K562 (cell line): ENCODE measurements at regions of chr2 and their contacts with region 1.

Region 1: DNA sequence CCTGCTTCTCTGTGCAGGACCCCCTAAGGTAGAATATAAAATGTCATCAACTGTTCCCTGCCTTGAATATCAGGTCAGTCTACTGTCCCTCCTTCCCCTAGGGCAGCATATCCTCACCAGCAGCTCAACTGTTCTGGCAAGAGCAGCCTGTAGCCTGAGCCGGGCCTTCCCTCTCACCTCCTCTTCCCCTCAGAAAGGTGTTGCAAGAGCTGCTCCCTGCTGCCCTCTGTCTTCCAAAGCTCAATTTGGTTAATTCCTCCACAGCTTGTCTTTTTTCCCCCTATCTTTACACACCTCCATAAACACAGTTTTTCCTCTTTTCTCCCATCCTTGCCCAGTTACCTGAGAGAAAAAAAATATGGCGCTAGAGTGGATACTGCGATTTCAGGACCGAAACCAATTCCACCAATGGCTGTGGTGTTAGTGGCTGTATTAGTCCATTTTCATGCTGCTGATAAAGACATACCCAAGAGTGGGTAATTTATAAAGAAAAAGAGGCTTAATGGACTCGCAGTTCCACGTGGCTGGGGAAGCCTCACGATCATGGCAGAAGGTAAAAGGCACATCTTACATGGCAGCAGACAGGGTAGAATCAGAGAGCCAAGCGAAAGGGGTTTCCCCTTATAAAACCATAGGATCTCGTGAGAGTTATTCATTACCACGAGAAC is 184.7 kb downstream of the MREG start:
- DNase-seq: peak; percentile 28 to 74 (median 42)
- ATAC-seq: peak; percentile 74
- H3K4me3 ChIP-seq: no peak overlapping the region
- H3K27ac ChIP-seq: no peak overlapping the region
- H3K4me1 ChIP-seq: peaks cover 6 to 31% of the 10 kb centered on the region in 2 experiments; a peak in 3 of 5 replicates
- H3K27me3 ChIP-seq: no peaks in the 10 kb centered on the region
- CTCF ChIP-seq: peak; percentile 57 to 69 (median 65)
- EP300 ChIP-seq: no peak
- POLR2A ChIP-seq: no peak
- RAD21 ChIP-seq: peak; percentile 56 to 65

Region 2: DNA sequence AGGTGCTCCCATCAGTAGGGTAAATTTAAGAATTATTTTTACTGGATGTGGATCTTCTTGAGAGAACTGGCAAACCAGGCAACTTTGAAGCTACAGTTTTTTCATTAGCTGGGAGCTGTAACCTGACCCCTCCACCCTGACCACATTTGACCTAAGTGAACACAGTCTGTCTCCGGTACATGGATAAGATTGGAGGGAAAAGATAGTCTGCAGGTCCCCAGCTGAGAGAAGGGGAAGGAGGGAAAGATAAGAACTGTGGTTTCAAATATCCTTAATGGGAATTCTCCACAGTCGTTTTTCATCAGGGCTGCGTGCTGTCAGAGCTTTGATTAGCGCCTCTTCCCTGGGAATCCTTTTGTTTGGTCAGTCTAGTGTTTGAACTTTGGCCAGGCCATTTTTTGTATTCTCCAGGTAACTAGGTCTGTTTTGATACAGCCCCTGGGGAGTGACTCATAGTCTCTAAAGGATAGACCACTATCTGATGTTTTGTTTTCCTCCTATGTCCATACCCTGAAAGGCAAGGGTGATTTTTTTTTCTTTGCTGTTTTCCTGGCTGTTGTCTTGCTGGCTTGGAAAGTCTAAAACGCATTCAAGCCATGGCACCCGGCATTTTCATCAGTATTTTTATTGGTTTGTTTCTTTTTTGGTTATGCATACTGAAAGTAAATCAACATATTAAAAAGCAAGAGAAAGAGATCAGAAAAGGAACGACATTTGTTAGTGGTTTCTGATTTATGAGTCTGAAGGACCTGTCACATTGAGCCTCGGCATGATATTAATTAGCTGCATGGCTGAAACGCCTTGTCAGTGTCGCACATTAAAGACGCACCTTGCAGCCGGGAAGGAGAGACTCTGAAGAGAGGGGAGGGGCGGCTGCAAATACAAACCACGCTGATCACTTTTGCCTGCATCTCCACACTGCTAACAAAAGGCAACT is 209.4 kb before region 1 on chr2:
- CTCF ChIA-PET with region 1: no interaction called
- POLR2A ChIA-PET with region 1: no interaction called
- in situ Hi-C with region 1: no loop called
- intact Hi-C with region 1: loop called (anchors 1 kb)
- DNase-seq: peak; percentile 70 to 85 (median 74)
- ATAC-seq: peak; percentile 86
- H3K4me3 ChIP-seq: no peak overlapping the region; the same call in 1 of the 2 replicates
- H3K27ac ChIP-seq: peak overlapping the region; percentile 81
- H3K4me1 ChIP-seq: peaks cover 3 to 21% of the 10 kb centered on the region in 2 experiments; a peak in 4 of 5 replicates
- H3K27me3 ChIP-seq: no peaks in the 10 kb centered on the region
- CTCF ChIP-seq: no peak
- EP300 ChIP-seq: peak; percentile 96
- POLR2A ChIP-seq: no peak
- RAD21 ChIP-seq: peak; percentile 7 to 35; a peak in 2 of 4 replicates

Region 3: DNA sequence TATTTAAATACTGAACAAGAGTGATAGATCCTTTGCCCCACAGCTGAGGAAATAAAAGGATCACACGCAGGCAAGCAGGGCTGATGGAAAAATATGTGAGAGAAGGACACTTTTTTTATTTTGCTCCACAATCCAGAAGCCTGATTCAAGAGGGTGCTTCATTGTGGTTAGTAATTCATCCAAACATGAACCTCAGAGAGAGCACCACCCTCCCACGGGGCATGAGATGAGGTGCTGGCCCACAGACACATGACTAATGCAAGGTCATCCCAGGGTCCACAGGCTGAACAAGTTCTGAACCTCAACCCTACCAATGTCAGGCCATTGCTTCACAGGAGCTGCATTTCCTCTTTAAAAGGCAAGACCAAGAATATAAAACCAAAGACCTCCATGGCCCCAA is 54.9 kb before region 1 on chr2:
- CTCF ChIA-PET with region 1: no interaction called
- POLR2A ChIA-PET with region 1: no interaction called
- in situ Hi-C with region 1: no loop called
- intact Hi-C with region 1: loop called (anchors 5 kb)
- DNase-seq: peak in 1 of 4 experiments; percentile 47
- ATAC-seq: peak; percentile 45
- H3K4me3 ChIP-seq: no peak overlapping the region
- H3K27ac ChIP-seq: no peak overlapping the region
- H3K4me1 ChIP-seq: peaks cover 4 to 37% of the 10 kb centered on the region in 2 experiments
- H3K27me3 ChIP-seq: no peaks in the 10 kb centered on the region
- CTCF ChIP-seq: no peak
- EP300 ChIP-seq: no peak
- POLR2A ChIP-seq: no peak
- RAD21 ChIP-seq: no peak

Region 4: DNA sequence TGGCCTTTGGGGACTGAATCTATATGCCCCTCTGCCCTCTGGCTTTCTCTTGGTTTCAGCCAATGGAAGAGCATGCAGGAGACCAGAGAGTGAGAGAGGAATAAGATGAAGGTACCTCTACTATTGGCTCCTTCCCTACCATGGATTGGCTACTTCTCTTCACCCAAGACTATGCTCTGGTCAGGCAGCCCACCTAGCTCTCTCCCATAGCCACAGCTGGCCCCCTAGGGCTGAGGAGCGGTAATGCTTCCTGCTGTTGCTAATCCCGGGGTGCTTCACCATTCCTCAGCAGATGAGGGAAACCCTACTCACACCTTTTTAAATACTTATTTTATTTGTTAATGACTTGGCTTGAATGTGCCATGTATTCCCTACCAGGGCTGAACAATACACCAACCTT is 42.3 kb after region 1 on chr2:
- CTCF ChIA-PET with region 1: no interaction called
- POLR2A ChIA-PET with region 1: interaction called, 3 read pairs
- in situ Hi-C with region 1: no loop called
- intact Hi-C with region 1: loop called (anchors 1 kb)
- DNase-seq: peak; percentile 32 to 60 (median 38)
- ATAC-seq: peak; percentile 97
- H3K4me3 ChIP-seq: no peak overlapping the region
- H3K27ac ChIP-seq: no peak overlapping the region
- H3K4me1 ChIP-seq: peaks cover 0 to 12% of the 10 kb centered on the region in 2 experiments; a peak in 2 of 5 replicates
- H3K27me3 ChIP-seq: no peaks in the 10 kb centered on the region
- CTCF ChIP-seq: peak; percentile 56 to 66 (median 65)
- EP300 ChIP-seq: no peak
- POLR2A ChIP-seq: no peak
- RAD21 ChIP-seq: peak; percentile 32 to 73

Region 5: DNA sequence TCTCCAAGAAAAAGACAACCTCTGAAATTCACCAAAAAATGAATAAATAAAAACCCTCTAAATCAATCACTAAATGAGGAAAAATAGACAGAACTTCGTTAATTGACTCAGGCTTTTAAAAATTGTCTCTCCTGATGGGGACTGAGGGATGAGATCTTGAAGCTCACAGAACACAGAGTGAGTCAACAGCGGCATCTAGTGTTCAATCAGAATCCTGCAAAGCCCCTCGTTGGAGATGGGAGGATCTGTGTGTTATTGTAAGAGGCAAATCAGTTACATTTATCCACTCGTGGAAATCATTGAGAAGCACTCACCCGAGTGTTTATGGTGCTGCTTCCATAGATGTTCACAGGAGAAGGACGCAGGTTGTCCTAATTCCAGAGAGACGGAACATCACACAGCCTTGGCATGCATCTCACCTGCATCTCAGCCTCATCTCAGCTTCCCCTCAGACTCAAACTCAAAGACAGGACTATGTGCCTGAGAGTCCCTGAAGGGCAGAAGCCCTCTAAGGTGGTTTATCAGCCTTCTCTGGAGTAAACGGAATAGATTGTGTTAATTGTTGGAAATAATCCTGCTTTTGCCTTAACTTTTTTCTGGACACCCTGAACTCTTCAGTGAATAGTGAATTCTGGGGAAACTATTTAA is 102.7 kb after region 1 on chr2:
- CTCF ChIA-PET with region 1: no interaction called
- POLR2A ChIA-PET with region 1: no interaction called
- in situ Hi-C with region 1: no loop called
- intact Hi-C with region 1: no loop called
- DNase-seq: peak; percentile 49 to 78 (median 54)
- ATAC-seq: peak; percentile 91
- H3K4me3 ChIP-seq: no peak overlapping the region
- H3K27ac ChIP-seq: no peak overlapping the region
- H3K4me1 ChIP-seq: peaks cover 0 to 16% of the 10 kb centered on the region in 2 experiments; a peak in 3 of 5 replicates
- H3K27me3 ChIP-seq: no peaks in the 10 kb centered on the region
- CTCF ChIP-seq: peak; percentile 67 to 82 (median 80)
- EP300 ChIP-seq: no peak
- POLR2A ChIP-seq: no peak
- RAD21 ChIP-seq: peak; percentile 87 to 88